Naive thymus-derived CD8-positive, alpha-beta T cell (primary cell): ENCODE measurements at regions of chr12 and their contacts with region 1.

Region 1: GRCh38 chr12:47397664-47398281 is 308.1 kb downstream of the RPAP3 start:
- DNase-seq: peak in 8 of 10 donors; percentile 18 to 81 (median 49)
- ATAC-seq: peak; percentile 85 to 93
- H3K4me3 Mint-ChIP-seq: peak overlapping the region in 7 of 10 donors; percentile 20 to 79 (median 70)
- H3K27ac Mint-ChIP-seq: peak overlapping the region; percentile 84 to 97 (median 92)
- H3K4me1 Mint-ChIP-seq: peaks cover 20 to 72% (median 53%) of the 10 kb centered on the region in 4 donors
- H3K27me3 Mint-ChIP-seq: no peaks in the 10 kb centered on the region

Region 2: DNA sequence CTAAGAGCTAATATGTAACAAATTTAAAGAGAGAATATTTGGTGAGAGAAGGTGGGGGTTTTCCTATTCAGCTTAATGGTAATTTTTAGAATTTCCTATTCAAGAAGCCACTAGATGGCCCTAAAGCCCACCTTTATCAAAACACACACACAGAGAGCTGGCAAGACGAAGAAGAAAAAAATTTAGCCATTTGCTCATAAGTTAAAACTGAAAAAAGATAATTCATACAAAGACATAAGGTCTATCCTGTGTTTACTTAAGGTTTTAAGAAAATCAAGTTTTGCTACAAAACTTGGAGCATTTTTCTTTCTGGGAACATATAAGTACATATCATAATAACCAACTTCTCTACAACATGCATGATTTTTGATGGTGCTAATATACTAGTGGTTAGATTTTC is 365.1 kb before region 1 on chr12:
- POLR2A ChIA-PET with region 1: interaction called, 24 read pairs
- DNase-seq: peak in 6 of 10 donors; percentile 34 to 74 (median 68)
- ATAC-seq: peak; percentile 80 to 88
- H3K4me3 Mint-ChIP-seq: peak overlapping the region in 2 of 10 donors; percentile 5
- H3K27ac Mint-ChIP-seq: peak overlapping the region in 5 of 10 donors; percentile 1 to 67 (median 16)
- H3K4me1 Mint-ChIP-seq: peaks cover 15 to 33% (median 20%) of the 10 kb centered on the region in 4 donors
- H3K27me3 Mint-ChIP-seq: no peaks in the 10 kb centered on the region

Region 3: DNA sequence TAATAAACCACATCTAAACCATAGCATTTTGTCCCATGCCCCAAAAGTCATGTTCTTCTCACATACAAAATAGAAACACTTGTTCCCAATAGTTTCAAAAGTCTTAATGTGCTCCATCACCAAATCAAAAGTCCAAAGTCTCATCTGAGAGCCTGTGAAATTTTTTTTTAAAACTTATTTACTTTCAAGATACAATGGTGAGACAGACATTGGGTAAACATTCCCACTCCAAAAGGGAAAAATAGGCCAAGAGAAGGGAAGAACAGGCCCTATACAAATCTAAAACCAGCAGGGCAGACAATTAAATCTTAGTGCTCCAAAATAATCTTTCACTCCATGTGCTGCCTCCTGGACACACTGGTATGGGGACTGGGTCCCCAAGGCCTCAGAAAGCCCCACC is 233.7 kb before region 1 on chr12:
- POLR2A ChIA-PET with region 1: no interaction called
- DNase-seq: no peak
- ATAC-seq: no peak
- H3K4me3 Mint-ChIP-seq: no peak overlapping the region
- H3K27ac Mint-ChIP-seq: peak overlapping the region in 4 of 10 donors; percentile 1 to 31 (median 21)
- H3K4me1 Mint-ChIP-seq: peaks cover 19 to 21% (median 20%) of the 10 kb centered on the region in 4 donors
- H3K27me3 Mint-ChIP-seq: no peaks in the 10 kb centered on the region

Region 4: DNA sequence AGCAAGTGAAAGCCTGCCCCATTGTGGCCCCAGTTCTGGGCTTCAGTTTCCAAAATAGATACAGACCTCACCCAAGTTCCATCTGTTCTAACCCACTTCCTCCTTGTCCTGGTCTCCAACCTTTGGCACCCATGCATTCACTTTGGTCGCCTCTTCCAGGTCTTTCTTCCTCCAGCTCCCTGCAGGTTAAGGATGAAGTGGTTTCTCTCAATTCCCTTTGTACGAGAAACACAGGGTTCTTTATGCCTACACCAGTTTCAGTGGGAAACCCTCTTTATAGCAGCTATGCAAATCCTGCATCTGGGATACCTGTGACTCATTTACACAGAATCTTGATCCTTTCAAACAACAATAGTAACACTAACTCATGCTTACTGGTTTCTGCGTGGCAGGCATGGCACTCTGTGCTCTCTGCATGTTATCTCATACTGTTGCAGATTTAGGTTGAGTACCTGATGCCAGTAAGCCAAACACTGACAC is 207.5 kb before region 1 on chr12:
- POLR2A ChIA-PET with region 1: interaction called, 13 read pairs
- DNase-seq: no peak
- ATAC-seq: no peak
- H3K4me3 Mint-ChIP-seq: peak overlapping the region in 9 of 10 donors; percentile 40 to 87 (median 80)
- H3K27ac Mint-ChIP-seq: peak overlapping the region; percentile 79 to 100 (median 92)
- H3K4me1 Mint-ChIP-seq: peaks cover 56 to 95% (median 89%) of the 10 kb centered on the region in 4 donors
- H3K27me3 Mint-ChIP-seq: no peaks in the 10 kb centered on the region

Region 5: DNA sequence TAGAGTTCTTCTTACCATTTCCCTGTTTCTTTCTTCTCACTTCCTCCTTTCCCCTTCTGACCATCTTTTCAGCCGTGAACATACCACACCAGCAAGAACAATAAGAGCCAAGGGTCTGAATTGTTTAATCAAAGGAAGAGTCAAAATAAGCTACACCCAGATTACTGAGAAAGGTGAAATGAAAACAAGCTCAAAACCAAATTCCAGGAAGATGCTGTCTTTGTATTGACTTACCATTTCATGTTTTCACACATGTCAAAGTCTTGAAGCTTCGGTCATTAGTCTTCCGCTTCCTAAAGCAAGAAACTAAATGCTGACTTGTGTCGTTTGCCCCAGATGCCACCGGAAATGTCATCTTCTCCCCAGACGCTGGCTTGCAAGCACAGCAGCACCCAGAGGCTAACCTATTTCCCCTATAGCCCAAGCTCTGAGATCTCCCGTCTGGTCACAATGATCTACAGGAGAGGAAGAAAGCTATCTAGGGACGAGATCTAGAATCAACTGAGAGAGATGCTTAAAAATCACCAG is 181.6 kb before region 1 on chr12:
- POLR2A ChIA-PET with region 1: interaction called, 58 read pairs
- DNase-seq: peak in 9 of 10 donors; percentile 50 to 84 (median 70)
- ATAC-seq: peak; percentile 43 to 69
- H3K4me3 Mint-ChIP-seq: peak overlapping the region; percentile 95 to 99 (median 98)
- H3K27ac Mint-ChIP-seq: peak overlapping the region; percentile 93 to 99 (median 96)
- H3K4me1 Mint-ChIP-seq: peaks cover 9 to 66% (median 23%) of the 10 kb centered on the region in 4 donors
- H3K27me3 Mint-ChIP-seq: no peaks in the 10 kb centered on the region

Region 6: DNA sequence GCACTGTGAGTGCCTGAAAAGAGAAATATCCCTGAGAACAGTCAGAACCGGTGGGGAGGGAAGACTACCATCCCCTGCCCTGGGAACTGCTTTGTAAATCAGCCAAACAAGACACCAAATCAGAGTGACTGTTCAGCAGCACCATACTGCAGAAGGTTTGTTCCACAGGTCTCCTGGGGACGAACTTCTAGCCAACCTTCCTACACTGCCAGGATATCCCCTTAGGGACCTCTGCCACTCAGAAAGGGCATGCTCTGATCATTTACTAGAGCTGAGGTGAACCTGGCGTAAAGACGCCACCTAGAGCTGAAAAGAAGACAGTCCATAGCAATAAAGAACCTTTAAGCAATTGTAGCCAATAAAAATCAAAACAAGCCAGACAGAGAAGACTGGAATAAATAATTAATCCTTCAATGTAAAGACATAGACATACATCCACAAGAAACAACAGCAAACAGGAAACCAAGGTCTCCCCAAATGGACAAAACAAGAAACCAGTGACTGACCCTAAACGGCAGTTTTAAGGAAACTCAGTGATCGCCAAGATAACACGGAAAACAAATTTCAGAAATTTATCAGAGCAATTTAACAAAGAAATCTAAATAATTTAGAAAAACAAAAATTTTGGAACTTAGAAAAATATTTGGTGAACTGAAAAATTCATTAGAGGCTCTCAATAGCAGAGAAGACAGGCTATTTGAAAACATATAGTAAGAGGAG is 89.9 kb before region 1 on chr12:
- POLR2A ChIA-PET with region 1: interaction called, 33 read pairs
- DNase-seq: peak in 9 of 10 donors; percentile 27 to 77 (median 50)
- ATAC-seq: peak; percentile 93 to 96
- H3K4me3 Mint-ChIP-seq: peak overlapping the region; percentile 79 to 93 (median 90)
- H3K27ac Mint-ChIP-seq: peak overlapping the region; percentile 69 to 96 (median 92)
- H3K4me1 Mint-ChIP-seq: peaks cover 20 to 45% (median 43%) of the 10 kb centered on the region in 4 donors
- H3K27me3 Mint-ChIP-seq: no peaks in the 10 kb centered on the region

Region 7: GRCh38 chr12:47442310-47442709 is 44.5 kb after region 1 on chr12:
- POLR2A ChIA-PET with region 1: no interaction called
- DNase-seq: no peak
- ATAC-seq: no peak
- H3K4me3 Mint-ChIP-seq: no peak overlapping the region
- H3K27ac Mint-ChIP-seq: no peak overlapping the region
- H3K4me1 Mint-ChIP-seq: no peaks in the 10 kb centered on the region
- H3K27me3 Mint-ChIP-seq: no peaks in the 10 kb centered on the region

Region 8: GRCh38 chr12:47630316-47630715 is 232.5 kb after region 1 on chr12:
- POLR2A ChIA-PET with region 1: no interaction called
- DNase-seq: no peak
- ATAC-seq: no peak
- H3K4me3 Mint-ChIP-seq: no peak overlapping the region
- H3K27ac Mint-ChIP-seq: peak overlapping the region in 1 of 10 donors; percentile 20
- H3K4me1 Mint-ChIP-seq: peaks cover 6 to 7% (median 7%) of the 10 kb centered on the region in 4 donors
- H3K27me3 Mint-ChIP-seq: no peaks in the 10 kb centered on the region